RWPE1 (cell line): ENCODE measurements at regions of chr2 and their contacts with region 1.

Region 1: DNA sequence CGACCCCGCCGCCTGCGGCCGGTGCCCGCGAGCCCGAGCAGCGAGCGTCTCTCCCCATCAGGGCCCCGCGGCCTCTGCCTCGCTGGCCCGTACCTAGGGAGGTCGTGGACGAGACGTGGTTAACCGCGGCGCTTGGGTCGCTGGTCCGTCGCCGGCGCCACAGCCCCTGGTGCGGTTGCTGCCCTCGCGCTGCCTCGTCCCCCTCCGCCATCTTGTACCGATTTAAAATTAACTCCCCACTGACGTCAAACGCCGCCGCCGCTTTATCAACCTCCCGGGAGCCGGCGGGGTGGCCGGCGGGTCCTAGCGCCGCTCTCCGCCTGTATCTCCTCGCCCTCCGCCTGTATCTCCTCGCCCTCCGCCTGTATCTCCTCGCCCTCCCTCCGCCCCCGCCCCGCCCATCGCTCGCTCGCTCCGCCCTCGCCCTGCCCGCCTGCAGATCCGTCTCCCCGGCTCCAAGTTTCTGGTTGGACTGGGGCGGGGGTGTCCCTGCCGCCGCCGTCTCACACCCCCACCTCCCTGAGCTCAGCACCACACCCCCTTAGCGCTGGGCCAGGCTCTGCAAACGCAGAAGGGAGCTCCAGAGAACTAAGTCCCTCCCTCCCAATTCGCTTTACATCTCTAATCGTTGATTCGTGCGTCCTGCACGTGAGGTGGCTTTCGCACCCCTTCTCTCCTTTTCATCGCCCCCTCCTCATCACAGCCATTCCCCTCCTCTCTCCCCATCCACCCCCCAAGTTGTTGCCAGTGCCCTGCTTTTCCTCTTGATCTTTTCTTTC is at the start of gene ATL2:
- DNase-seq: peak; percentile 92
- H3K27ac ChIP-seq: peak within 1 kb of the TSS; percentile 89
- CTCF ChIP-seq: 0 out of 2 replicates have a peak, but pooled peaks have one; percentile 32

Region 2: GRCh38 chr2:38260469-38260868 is 116.8 kb before region 1 on chr2:
- CTCF ChIA-PET with region 1: no interaction called
- POLR2A ChIA-PET with region 1: no interaction called
- DNase-seq: no peak
- H3K27ac ChIP-seq: no peak overlapping the region
- CTCF ChIP-seq: no peak

Region 3: GRCh38 chr2:38432820-38433606 is 55.8 kb after region 1 on chr2:
- CTCF ChIA-PET with region 1: no interaction called
- POLR2A ChIA-PET with region 1: no interaction called
- DNase-seq: no peak
- H3K27ac ChIP-seq: no peak overlapping the region
- CTCF ChIP-seq: no peak

Region 4: DNA sequence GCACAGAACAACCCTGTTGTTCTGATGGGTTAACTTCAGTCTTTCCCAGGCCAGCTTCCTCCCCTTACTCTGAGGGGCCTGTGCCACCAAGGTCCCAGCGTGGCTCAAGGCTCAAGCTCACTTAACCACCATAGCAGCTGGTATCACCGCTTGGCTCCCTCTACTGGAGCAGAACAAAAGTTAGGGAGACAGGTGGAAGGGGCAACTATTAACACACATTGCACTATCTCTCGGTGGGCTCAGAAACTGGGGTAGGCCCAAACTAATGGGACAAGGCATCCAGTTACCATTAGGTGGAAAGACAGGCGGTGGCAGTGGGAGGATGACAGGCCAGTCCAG is 88.5 kb after region 1 on chr2:
- CTCF ChIA-PET with region 1: interaction called, 17 read pairs
- POLR2A ChIA-PET with region 1: interaction called, 3 read pairs
- DNase-seq: peak; percentile 57
- H3K27ac ChIP-seq: no peak overlapping the region
- CTCF ChIP-seq: no peak

Region 5: GRCh38 chr2:38508311-38509039 is 131.2 kb after region 1 on chr2:
- CTCF ChIA-PET with region 1: interaction called, 11 read pairs
- POLR2A ChIA-PET with region 1: no interaction called
- DNase-seq: peak; percentile 56
- H3K27ac ChIP-seq: 0 out of 2 replicates have a peak overlapping the region, but pooled peaks have one; percentile 21
- CTCF ChIP-seq: peak; percentile 42